MCF 10A (cell line): ENCODE measurements at regions of chr4 and their contacts with region 1.

Region 1: GRCh38 chr4:116150152-116150551 is 935.2 kb downstream of the TRAM1L1 start:
- DNase-seq: no peak
- H3K4me3 Mint-ChIP-seq: no peak overlapping the region
- H3K27ac Mint-ChIP-seq: no peak overlapping the region
- H3K4me1 Mint-ChIP-seq: no peaks in the 10 kb centered on the region
- H3K27me3 Mint-ChIP-seq: peaks cover 7% of the 10 kb centered on the region
- CTCF ChIP-seq: no peak

Region 2: DNA sequence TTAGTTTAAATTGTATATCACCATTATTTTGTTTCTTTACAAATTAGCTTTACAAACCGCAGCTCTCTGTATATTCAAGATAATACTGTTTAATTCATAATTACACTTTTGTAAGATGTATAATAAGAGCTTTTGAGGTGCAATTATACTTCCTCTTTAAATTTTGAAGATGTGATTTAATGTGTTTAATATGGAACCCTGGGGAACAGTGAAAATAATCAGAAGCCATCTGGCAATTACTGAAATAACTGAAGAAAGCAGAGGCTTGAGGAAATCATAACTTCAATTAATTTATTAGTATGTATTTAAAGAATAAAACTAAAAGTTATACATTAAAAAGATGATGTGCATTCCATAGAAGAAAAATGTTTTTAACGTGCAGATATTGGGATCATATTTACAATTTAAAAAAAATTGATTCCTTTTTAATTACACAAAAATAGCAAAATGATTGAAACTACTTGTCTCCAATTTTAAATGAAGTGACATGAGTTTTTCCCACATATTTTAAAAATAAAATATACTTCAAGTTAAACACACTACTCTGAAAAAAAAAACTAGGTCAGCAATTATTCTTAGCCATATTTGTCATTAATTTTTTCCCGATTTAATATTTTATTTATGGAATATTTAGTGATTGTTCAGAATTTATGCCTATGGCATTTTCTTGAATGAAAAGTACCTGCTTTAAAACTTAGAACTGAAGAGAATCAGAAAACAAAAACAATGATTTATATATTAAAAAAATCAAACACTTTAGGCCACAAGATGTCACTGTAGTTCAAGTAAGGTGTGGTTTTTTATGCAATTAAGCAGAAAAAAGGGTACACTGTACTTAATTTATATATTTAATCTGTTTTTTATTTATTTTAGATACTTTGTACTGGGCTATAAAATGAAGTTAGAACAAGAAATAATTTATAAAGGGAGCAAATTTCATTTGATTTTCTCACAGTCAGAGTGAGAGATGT is 94.0 kb before region 1 on chr4:
- CTCF ChIA-PET with region 1: interaction called, 4 read pairs
- POLR2A ChIA-PET with region 1: no interaction called
- intact Hi-C with region 1: loop called (anchors 10 kb)
- DNase-seq: peak; percentile 36
- H3K4me3 Mint-ChIP-seq: no peak overlapping the region
- H3K27ac Mint-ChIP-seq: no peak overlapping the region
- H3K4me1 Mint-ChIP-seq: no peaks in the 10 kb centered on the region
- H3K27me3 Mint-ChIP-seq: no peaks in the 10 kb centered on the region
- CTCF ChIP-seq: peak; percentile 44